ENCODE measurements at regions of chr14 and their contacts with region 1.

Region 1: DNA sequence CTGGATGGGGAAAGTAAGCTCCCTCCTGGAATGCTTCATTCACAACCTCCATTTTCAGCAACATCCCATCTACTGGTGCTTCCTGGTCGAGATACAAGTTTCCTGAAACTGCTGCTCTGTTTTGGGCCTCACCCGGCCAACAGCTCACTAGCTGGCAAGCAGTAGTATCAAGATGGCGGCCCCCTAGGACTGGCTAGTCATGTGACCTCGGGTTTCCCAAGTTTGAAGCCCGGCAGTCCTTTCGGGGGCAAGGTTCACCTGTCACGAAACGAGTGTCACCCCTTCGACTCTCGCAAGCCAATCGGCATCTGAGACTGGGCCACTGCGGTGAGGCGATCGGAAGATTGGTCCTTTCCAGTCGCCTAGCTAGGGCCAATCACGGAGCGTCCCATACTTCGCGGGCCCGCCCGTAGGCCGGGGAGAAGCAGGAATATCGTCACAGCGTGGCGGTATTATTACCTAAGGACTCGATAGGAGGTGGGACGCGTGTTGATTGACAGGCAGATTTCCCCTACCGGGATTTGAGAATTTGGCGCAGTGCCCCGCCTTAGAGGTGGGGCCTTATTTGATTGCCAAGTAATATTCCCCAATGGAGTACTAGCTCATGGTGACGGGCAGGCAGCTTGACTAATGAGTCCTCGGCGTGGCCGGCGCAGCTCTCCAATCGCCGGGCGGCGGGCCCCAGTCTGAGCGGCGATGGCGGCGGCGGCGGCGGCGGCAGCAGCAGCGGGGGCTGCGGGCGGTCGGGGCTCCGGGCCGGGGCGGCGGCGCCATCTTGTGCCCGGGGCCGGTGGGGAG is at the start of gene PABPN1:
- DNase-seq: peak; percentile 92

Region 2: GRCh38 chr14:23301288-23301968 is 19.5 kb before region 1 on chr14:
- CTCF ChIA-PET with region 1: interaction called, 8 read pairs
- POLR2A ChIA-PET with region 1: interaction called, 256 read pairs
- DNase-seq: peak; percentile 93

Region 3: DNA sequence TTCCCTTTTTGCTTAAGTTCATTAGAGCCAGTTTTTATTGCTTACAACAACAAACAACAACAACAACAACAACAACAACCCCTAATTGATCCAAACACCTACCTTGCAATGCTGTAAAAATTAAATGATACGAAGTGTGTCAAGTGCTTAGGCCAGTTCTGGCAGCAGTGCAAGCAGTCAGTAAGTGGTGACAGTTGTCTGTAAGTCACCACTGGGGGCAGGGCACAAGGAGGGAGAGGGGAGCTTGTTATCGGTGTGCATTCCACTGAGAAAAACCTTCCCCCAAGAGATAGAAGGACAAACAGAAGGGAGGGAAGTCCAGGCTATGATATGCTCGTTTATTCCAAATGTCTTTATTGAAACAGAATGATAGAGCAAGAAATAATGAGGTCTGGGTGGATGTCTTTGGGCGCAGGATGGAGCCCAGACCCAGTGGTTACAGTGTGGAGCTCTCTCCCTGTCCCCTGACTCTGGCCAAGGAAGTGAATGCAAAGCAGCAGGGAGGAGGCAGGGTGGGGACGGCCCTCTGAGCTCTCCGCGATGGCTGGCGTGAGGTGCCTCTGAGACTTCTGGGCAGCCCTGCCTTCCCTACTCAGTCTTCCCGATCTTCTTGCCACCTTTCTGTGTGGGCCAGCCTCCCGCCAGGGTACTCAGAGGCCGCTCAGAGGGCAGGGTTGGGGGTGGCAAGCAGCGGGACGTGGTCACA is 25.2 kb after region 1 on chr14:
- CTCF ChIA-PET with region 1: no interaction called
- POLR2A ChIA-PET with region 1: interaction called, 18 read pairs
- DNase-seq: no peak

Region 4: GRCh38 chr14:23360496-23360895 is 39.5 kb after region 1 on chr14:
- CTCF ChIA-PET with region 1: no interaction called
- POLR2A ChIA-PET with region 1: interaction called, 12 read pairs
- DNase-seq: no peak

Region 5: GRCh38 chr14:23392613-23393012 is 71.6 kb after region 1 on chr14:
- CTCF ChIA-PET with region 1: no interaction called
- POLR2A ChIA-PET with region 1: no interaction called
- DNase-seq: no peak

Measured in HEK293T (cell line).